Mammary epithelial cell (primary cell): ENCODE measurements at regions of chr5 and their contacts with region 1.

Region 1: GRCh38 chr5:149268928-149269557 is 2.6 kb upstream of the AFAP1L1 start:
- DNase-seq: peak; percentile 51
- H3K4me3 ChIP-seq: no peak overlapping the region
- H3K27ac ChIP-seq: no peak overlapping the region
- H3K4me1 ChIP-seq: peaks cover 16% of the 10 kb centered on the region
- H3K27me3 ChIP-seq: no peaks in the 10 kb centered on the region
- CTCF ChIP-seq: peak; percentile 57 to 70

Region 2: GRCh38 chr5:148826053-148826738 is 442.8 kb before region 1 on chr5 and contains the start of gene ADRB2:
- CTCF ChIA-PET with region 1: no interaction called
- dilution Hi-C with region 1: no loop called
- in situ Hi-C with region 1: no loop called
- intact Hi-C with region 1: loop called (anchors 10 kb)
- DNase-seq: peak; percentile 99
- H3K4me3 ChIP-seq: peak within 1 kb of the TSS; percentile 69 to 81 (median 81)
- H3K27ac ChIP-seq: peak within 1 kb of the TSS; percentile 76
- H3K4me1 ChIP-seq: peaks cover 33% of the 10 kb centered on the region
- H3K27me3 ChIP-seq: no peaks in the 10 kb centered on the region
- CTCF ChIP-seq: peak in 1 of 2 donors; percentile 23
- total RNA-seq, gene ADRB2: 4.8 to 14.8 TPM

Region 3: GRCh38 chr5:149141224-149141956 is 127.7 kb before region 1 on chr5 and contains the start of gene ABLIM3:
- CTCF ChIA-PET with region 1: interaction called, 4 read pairs
- dilution Hi-C with region 1: no loop called
- in situ Hi-C with region 1: no loop called
- intact Hi-C with region 1: loop called (anchors 1 kb)
- DNase-seq: peak; percentile 74
- H3K4me3 ChIP-seq: peak within 1 kb of the TSS; percentile 73 to 84 (median 82)
- H3K27ac ChIP-seq: peak within 1 kb of the TSS; percentile 43
- H3K4me1 ChIP-seq: peaks cover 12% of the 10 kb centered on the region
- H3K27me3 ChIP-seq: no peaks in the 10 kb centered on the region
- CTCF ChIP-seq: peak; percentile 75 to 85
- total RNA-seq, gene ABLIM3: 17.3 to 38.6 TPM

Region 4: DNA sequence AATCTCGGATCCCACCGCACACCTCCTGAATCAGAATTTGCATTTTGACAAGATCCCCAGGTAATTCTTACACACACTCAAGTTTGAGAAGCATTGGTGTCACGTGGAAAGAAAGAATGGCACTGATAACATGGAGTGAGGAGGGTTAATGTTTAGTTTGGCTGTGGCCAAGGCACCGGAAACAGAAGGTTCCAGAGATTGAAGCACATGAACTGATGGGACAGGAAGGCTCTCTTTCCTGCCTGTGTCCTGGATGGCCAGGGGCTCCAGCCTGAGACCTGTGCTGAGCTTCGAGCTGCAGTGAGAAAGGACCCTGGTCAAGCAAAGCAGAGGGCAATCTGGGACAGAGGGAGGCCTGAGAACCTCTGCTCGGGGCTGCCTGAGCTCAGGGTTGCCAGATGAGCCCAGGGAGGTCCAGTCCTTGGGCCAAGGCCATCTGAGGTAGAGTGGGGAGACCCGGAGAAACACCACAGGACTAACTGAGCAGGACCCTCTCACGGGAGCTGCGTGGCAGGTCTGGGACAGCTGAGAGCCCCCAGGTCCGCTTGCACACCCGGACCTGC is 29.9 kb after region 1 on chr5:
- CTCF ChIA-PET with region 1: interaction called, 6 read pairs
- dilution Hi-C with region 1: no loop called
- in situ Hi-C with region 1: no loop called
- intact Hi-C with region 1: loop called (anchors 1 kb)
- DNase-seq: no peak
- H3K4me3 ChIP-seq: no peak overlapping the region
- H3K27ac ChIP-seq: no peak overlapping the region
- H3K4me1 ChIP-seq: peaks cover 30% of the 10 kb centered on the region
- H3K27me3 ChIP-seq: no peaks in the 10 kb centered on the region
- CTCF ChIP-seq: no peak

Region 5: DNA sequence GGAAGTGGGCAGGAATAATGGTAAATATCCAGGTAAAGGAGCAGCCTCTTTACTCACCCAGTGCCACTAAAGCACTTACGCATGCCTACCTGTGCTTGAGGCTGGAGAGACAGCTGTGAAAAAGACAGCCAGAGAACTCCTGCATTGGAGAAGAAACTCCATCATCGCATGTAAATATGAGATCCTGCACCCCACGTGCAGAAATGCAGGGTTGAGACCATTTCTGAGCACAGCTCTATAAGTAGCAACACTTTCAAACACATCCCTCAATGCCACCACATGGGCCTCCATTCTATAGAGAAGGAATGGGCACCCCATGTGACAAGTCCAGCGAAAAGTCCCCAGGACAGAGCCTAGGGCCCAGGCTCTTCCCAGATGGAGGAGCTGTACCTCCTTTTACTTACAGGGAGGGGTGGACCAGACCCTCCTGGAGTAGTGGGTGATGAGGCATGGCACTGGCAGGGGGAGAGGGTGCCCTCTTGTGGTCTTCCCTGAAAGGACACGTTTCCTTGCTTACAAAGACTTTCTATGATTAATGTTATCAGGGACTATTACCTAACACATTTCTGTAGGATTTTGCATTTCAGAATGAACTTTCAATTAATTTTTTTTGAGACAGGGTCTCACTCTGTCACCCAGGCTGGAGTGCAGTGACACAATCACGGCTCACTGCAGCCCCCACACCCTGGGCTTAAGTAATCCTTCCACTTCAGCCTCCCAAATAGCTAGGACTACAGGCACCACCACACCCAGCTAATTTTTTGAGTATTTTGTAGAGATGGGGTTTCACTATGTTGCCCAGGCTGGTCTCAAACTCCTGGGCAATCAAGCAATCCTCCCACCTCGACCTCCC is 165.3 kb after region 1 on chr5:
- CTCF ChIA-PET with region 1: no interaction called
- dilution Hi-C with region 1: no loop called
- in situ Hi-C with region 1: no loop called
- intact Hi-C with region 1: loop called (anchors 1 kb)
- DNase-seq: no peak
- H3K4me3 ChIP-seq: no peak overlapping the region
- H3K27ac ChIP-seq: no peak overlapping the region
- H3K4me1 ChIP-seq: peaks cover 16% of the 10 kb centered on the region
- H3K27me3 ChIP-seq: no peaks in the 10 kb centered on the region
- CTCF ChIP-seq: peak; percentile 93